ENCODE measurements at regions of chr2 and their contacts with region 1.

Region 1: GRCh38 chr2:128318776-128319464 is at the start of gene HS6ST1:
- DNase-seq: peak; percentile 88 to 92 (median 88)
- ATAC-seq: peak; percentile 83
- H3K4me3 ChIP-seq: peak within 1 kb of the TSS; percentile 81 to 86
- H3K27ac ChIP-seq: peak within 1 kb of the TSS in 3 of 4 donors; percentile 66 to 77 (median 72)
- H3K4me1 ChIP-seq: peaks cover 55% of the 10 kb centered on the region
- H3K27me3 ChIP-seq: no peaks in the 10 kb centered on the region
- CTCF ChIP-seq: no peak
- POLR2A ChIP-seq: peak in 1 of 3 donors; percentile 19
- total RNA-seq, gene HS6ST1: 25.4 to 44.8 TPM

Region 2: DNA sequence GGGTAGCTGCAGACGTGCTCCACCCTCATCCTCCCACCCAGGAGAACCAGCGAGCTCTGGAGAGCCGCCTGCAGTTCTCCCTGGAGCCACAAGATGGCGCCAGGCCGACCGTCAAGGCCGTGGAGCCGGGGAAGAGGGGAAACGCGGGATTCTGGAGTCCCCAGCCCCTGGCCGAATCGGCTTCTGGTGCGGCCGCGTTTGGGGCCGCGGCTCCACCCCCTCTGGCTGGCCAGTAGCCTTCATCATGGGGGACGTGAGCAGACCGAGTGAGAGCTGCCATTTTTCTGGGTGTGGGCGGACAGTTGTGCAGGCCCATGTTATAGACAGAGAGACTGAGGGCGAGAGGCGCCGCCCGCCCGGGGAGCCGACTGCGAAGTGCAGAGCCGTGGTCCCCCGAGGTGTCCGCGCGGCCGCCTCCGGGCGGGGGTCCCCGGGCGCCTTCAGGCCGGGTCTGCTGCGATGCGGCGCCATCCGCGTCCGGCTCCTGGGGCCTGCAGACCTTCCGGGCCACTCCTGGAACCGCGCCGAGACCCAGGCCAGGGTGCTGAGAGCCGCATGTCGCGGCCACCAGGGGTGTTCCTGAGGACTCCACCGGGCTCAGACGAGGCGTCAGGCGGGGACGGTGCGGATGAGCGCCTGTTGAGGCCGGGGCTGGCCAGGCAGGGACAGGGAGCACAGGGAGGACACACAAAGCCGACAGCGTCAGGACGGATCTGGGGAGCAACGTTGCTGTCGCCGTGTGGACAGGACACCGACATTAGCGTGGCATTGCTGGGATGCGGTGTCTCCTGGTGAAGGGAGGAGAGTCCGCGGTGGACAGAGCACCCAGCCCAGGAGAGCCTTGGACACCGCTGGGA is 418.0 kb after region 1 on chr2:
- intact Hi-C with region 1: loop called (anchors 10 kb)
- DNase-seq: peak; percentile 83 to 90 (median 86)
- ATAC-seq: peak; percentile 88
- H3K4me3 ChIP-seq: no peak overlapping the region
- H3K27ac ChIP-seq: no peak overlapping the region
- H3K4me1 ChIP-seq: peaks cover 21% of the 10 kb centered on the region
- H3K27me3 ChIP-seq: peaks cover 0 to 4% of the 10 kb centered on the region in 2 donors
- CTCF ChIP-seq: peak; percentile 95 to 99 (median 97)
- POLR2A ChIP-seq: no peak